G401 (cell line): ENCODE measurements at regions of chr1 and their contacts with region 1.

Region 1: DNA sequence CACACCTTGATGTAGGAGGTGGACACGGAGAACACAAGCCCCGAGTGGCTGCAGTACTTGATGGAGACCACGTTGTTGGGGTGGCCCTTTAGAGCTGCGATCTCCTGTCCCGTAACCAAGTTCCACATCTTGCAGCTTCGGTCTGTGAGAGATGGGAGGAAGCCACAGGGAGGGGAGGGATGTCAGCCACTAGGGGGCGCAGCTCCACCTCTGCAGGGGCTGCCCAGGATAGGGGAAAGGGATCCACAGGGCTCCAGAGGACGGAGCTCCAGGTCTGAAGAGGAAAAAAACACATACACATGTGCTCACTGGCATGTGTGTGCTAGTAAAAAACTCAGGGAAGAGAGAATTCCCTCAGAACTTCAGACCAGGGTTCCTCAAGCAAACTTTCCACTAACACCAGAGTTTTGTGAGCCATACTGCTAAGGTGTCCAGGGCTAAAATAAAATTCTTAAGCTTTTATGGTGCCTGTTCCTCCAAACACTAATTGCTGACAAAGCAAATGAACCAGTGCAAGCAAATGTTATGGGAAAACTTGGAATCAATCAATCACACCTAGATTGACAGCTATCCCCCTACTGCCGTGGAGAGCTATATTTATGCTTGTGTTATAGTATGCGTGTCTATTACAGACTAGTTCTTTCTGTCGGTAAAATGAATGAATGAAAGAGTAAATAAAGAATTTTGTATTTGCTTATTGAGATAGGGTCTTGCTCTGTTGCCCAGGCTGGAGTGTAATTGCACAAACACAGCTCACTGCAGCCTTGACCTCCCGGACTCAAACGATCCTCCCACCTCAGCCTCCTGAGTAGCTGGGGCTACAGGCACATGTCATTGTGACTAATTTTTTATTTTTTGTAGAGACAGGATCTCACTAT is 43.7 kb downstream of the KIF21B start:
- DNase-seq: peak; percentile 13

Region 2: DNA sequence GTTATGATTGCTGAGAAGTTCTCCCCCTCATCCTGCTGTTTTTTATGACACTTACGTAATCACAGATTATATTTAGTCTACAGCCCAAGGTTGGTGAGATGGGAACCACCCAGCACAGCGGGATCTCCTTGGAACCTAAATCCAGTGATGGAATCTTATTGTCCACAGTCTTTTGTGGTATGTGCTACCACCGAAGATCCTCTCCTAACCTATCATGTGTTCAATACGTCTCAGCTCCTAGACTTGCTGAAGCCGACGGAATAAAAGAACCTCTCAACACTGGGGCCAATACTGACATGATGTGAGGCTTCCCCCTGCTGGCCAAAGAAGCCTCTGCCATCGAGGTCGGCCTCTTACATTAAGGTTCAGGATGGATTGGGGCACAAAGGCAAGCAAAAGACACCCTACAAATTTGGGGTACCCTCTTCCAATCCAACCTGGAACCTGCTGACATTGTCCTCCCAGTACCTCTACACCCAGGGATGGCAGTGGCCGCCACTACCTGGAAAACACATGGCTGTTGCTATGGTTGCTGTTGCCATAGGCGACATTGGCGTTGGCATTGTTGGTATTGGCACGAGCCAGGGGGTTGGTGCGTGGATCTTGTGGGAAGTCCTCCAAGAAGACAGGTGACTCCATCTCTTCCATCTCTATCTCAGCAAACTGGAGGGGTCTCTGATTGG is 63.1 kb after region 1 on chr1:
- in situ Hi-C with region 1: loop called (anchors 10 kb)
- DNase-seq: peak; percentile 59

Region 3: GRCh38 chr1:201108614-201109013 is 128.8 kb after region 1 on chr1:
- in situ Hi-C with region 1: no loop called
- DNase-seq: no peak

Region 4: GRCh38 chr1:201334325-201335173 is 354.7 kb after region 1 on chr1:
- in situ Hi-C with region 1: no loop called
- DNase-seq: no peak